CD14-positive monocyte (primary cell): ENCODE measurements at regions of chr5 and their contacts with region 1.

Region 1: DNA sequence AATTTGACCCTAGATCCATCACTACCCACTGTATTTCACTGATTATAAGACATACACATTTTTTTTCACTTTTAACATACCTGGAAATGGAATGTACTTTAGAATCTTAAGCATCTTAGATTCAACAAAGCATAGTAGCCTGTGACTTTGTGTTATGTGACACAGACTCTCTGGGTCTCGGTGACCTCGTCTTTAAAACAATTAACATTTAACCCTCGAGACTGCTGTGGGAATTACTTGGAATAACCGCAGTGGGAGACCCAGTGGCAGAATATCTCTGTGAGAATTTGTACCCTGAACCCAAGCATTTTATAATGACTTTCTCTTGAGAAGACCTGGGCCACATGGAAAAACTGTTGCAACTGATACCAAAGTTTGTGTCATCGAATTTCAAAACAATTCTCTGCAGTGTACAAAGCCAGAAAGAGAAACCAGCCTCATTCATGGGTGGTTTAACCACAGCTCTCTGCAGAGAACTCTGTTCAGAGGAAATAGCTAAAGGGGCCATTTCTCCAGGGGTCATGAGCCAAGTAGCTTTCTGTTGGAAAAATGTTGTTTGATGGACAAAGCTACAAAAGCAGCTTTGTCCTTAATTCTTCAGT is 10.0 kb upstream of the RETREG1 start:
- DNase-seq: peak; percentile 73 to 87 (median 85)
- H3K4me3 ChIP-seq: peak overlapping the region in 1 of 3 experiments; percentile 18
- H3K4me3 Mint-ChIP-seq: no peak overlapping the region
- H3K27ac ChIP-seq: peak overlapping the region; percentile 41 to 84
- H3K27ac Mint-ChIP-seq: peak overlapping the region; percentile 16 to 95 (median 91)
- H3K4me1 ChIP-seq: peaks cover 66 to 69% of the 10 kb centered on the region in 2 donors
- H3K4me1 Mint-ChIP-seq: peaks cover 68% of the 10 kb centered on the region
- H3K27me3 ChIP-seq: no peaks in the 10 kb centered on the region
- H3K27me3 Mint-ChIP-seq: peaks cover 0 to 4% (median 0%) of the 10 kb centered on the region in 3 donors
- CTCF ChIP-seq: no peak

Region 2: DNA sequence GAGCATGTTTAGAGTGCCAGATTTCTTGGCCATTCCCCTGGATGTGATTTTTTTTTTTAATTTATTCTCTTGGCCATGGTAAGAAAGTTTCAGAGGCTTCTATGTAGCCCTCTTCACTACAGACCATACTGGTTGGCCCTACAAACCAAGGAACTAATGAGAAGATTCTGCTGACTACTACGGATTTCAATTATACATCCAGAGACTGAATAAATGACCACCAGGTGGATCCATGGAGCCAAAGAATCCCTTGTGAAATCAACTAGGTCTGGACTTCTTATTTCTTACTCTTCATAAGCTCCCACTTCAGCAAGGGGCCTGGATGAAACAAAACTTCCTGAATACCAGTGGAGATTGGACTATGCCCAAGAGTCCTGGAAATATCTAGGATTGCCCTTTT is 188.8 kb before region 1 on chr5:
- intact Hi-C with region 1: no loop called
- DNase-seq: no peak
- H3K4me3 ChIP-seq: no peak overlapping the region
- H3K4me3 Mint-ChIP-seq: no peak overlapping the region
- H3K27ac ChIP-seq: no peak overlapping the region
- H3K27ac Mint-ChIP-seq: no peak overlapping the region
- H3K4me1 ChIP-seq: no peaks in the 10 kb centered on the region
- H3K4me1 Mint-ChIP-seq: peaks cover 2% of the 10 kb centered on the region
- H3K27me3 ChIP-seq: no peaks in the 10 kb centered on the region
- H3K27me3 Mint-ChIP-seq: peaks cover 3 to 8% (median 7%) of the 10 kb centered on the region in 3 donors
- CTCF ChIP-seq: peak; percentile 13

Region 3: DNA sequence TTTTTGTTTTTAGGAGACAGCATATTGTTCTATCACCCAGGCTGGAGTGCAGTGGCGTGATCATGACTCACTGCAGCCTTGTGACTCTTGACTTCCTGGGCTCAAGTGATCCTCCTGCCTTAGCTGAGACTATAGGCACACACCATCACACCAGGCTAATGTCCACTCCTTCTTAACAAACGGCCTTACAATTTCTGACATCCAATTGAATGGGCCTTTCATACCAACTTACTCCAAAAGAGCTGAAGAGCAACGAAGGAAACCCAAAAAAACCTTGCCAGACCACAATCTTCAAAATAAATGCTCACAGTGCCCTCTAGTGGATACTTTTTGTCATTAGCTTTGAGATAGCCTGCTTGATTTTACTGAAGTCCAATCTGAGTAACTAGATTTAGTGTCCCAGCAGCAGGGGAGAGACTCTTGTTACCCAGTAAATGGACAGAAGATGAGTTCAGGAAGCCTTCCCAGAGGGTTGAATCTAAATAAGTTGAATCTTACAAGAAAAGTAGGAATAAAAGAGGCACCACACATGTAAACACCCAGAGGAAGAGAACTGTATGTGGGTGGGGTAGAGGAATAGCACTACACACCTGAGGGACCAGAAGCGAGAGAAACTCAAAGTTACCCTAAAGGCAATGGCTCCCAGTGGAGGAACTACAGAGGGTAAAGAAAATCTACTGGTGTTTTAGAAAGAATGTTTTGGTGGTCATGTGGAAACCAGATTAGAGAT is 170.5 kb before region 1 on chr5:
- intact Hi-C with region 1: loop called (anchors 10 kb)
- DNase-seq: peak; percentile 68 to 90 (median 77)
- H3K4me3 ChIP-seq: no peak overlapping the region
- H3K4me3 Mint-ChIP-seq: peak overlapping the region in 1 of 2 donors; percentile 51
- H3K27ac ChIP-seq: peak overlapping the region in 1 of 2 donors; percentile 87
- H3K27ac Mint-ChIP-seq: peak overlapping the region; percentile 84 to 99 (median 92)
- H3K4me1 ChIP-seq: peaks cover 10 to 15% of the 10 kb centered on the region in 2 donors
- H3K4me1 Mint-ChIP-seq: peaks cover 28% of the 10 kb centered on the region
- H3K27me3 ChIP-seq: no peaks in the 10 kb centered on the region
- H3K27me3 Mint-ChIP-seq: no peaks in the 10 kb centered on the region
- CTCF ChIP-seq: peak; percentile 90

Region 4: GRCh38 chr5:16465544-16466466 is 161.0 kb before region 1 on chr5 and contains the start of gene ZNF622:
- intact Hi-C with region 1: loop called in 1 of 2 experiments (anchors 10 kb)
- DNase-seq: peak; percentile 89 to 96 (median 94)
- H3K4me3 ChIP-seq: peak within 1 kb of the TSS; percentile 81 to 97 (median 95)
- H3K4me3 Mint-ChIP-seq: peak within 1 kb of the TSS; percentile 94 to 97
- H3K27ac ChIP-seq: peak within 1 kb of the TSS; percentile 73 to 88
- H3K27ac Mint-ChIP-seq: peak within 1 kb of the TSS; percentile 93 to 98 (median 97)
- H3K4me1 ChIP-seq: peaks cover 37 to 56% of the 10 kb centered on the region in 2 donors
- H3K4me1 Mint-ChIP-seq: peaks cover 63% of the 10 kb centered on the region
- H3K27me3 ChIP-seq: no peaks in the 10 kb centered on the region
- H3K27me3 Mint-ChIP-seq: no peaks in the 10 kb centered on the region
- CTCF ChIP-seq: no peak
- polyA plus RNA-seq, gene ZNF622: 6.1 to 30.1 (median 25.8) TPM

Region 5: DNA sequence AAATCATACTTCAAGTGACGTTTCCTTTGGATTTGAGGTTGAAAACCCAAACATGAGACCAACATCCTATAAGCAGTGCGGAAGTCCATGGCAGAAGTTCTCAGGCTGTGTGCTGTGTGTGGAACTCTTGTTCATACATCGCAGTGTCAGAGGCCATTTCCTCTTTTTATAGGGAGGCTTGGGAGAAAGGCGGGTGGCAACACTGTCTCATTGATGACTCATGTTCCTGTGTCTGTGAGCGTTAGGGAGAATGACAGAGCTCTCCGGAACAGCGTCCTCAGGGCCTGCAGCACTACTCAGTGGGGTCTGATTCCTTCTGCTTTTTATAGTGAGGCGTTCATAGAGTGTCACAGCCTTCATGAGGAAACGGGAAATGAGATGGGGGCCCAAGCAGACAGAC is 491.9 kb after region 1 on chr5:
- intact Hi-C with region 1: loop called in 1 of 2 experiments (anchors 10 kb)
- DNase-seq: peak; percentile 99 to 100 (median 100)
- H3K4me3 ChIP-seq: no peak overlapping the region
- H3K4me3 Mint-ChIP-seq: peak overlapping the region; percentile 9 to 84
- H3K27ac ChIP-seq: peak overlapping the region; percentile 93 to 94
- H3K27ac Mint-ChIP-seq: peak overlapping the region; percentile 99 to 100 (median 100)
- H3K4me1 ChIP-seq: peaks cover 25 to 26% of the 10 kb centered on the region in 2 donors
- H3K4me1 Mint-ChIP-seq: peaks cover 30% of the 10 kb centered on the region
- H3K27me3 ChIP-seq: no peaks in the 10 kb centered on the region
- H3K27me3 Mint-ChIP-seq: peaks cover 0 to 3% (median 0%) of the 10 kb centered on the region in 3 donors
- CTCF ChIP-seq: no peak